ENCODE measurements at regions of chr4 and their contacts with region 1.

Region 1: DNA sequence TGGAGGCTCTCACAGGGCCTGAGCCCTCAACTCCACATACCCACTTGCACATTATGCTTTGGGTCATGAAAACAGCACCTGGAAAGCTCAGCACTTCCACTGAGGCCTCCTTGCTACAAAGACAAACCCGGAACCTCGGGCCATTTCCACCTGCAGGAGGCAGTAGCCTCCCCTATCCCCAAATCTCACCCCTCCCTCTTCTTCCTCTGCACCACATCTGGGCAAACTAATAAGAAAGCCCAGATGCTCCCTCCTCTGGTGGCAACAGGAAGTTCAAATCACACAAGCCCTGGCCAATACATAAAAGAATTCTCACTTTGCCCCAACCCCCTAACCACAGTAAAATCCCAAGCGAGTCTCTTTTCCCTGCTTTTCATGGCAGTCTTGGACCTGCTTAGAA is 136.4 kb downstream of the MAPK10 start:
- DNase-seq: peak; percentile 60
- ATAC-seq: peak; percentile 62
- H3K4me3 ChIP-seq: no peak overlapping the region
- H3K27ac ChIP-seq: no peak overlapping the region
- H3K4me1 ChIP-seq: peaks cover 11% of the 10 kb centered on the region
- H3K27me3 ChIP-seq: no peaks in the 10 kb centered on the region
- CTCF ChIP-seq: peak; percentile 80

Region 2: GRCh38 chr4:86043755-86044592 is 179.5 kb before region 1 on chr4:
- CTCF ChIA-PET with region 1: no interaction called
- POLR2A ChIA-PET with region 1: no interaction called
- intact Hi-C with region 1: loop called (anchors 10 kb)
- DNase-seq: peak; percentile 72
- ATAC-seq: peak; percentile 76
- H3K4me3 ChIP-seq: peak overlapping the region; percentile 22; the same call in 1 of the 2 replicates
- H3K27ac ChIP-seq: no peak overlapping the region
- H3K4me1 ChIP-seq: peaks cover 11% of the 10 kb centered on the region
- H3K27me3 ChIP-seq: no peaks in the 10 kb centered on the region
- CTCF ChIP-seq: peak; percentile 71

Region 3: GRCh38 chr4:86160426-86160825 is 63.0 kb before region 1 on chr4:
- CTCF ChIA-PET with region 1: no interaction called
- POLR2A ChIA-PET with region 1: no interaction called
- intact Hi-C with region 1: no loop called
- DNase-seq: no peak
- ATAC-seq: no peak
- H3K4me3 ChIP-seq: no peak overlapping the region
- H3K27ac ChIP-seq: no peak overlapping the region
- H3K4me1 ChIP-seq: no peaks in the 10 kb centered on the region
- H3K27me3 ChIP-seq: no peaks in the 10 kb centered on the region
- CTCF ChIP-seq: no peak